B cell (primary cell): ENCODE measurements at regions of chr1 and their contacts with region 1.

Region 1: GRCh38 chr1:74733604-74734484 is 892 bp downstream of the TYW3 start:
- DNase-seq: peak; percentile 76
- ATAC-seq: peak; percentile 60
- H3K4me3 ChIP-seq: peak overlapping the region; percentile 71 to 96 (median 78)
- H3K4me3 Mint-ChIP-seq: peak overlapping the region; percentile 98
- H3K27ac ChIP-seq: peak overlapping the region; percentile 73
- H3K27ac Mint-ChIP-seq: peak overlapping the region; percentile 97
- H3K4me1 ChIP-seq: peaks cover 9 to 15% of the 10 kb centered on the region in 2 donors
- H3K4me1 Mint-ChIP-seq: peaks cover 31% of the 10 kb centered on the region
- H3K27me3 ChIP-seq: no peaks in the 10 kb centered on the region
- H3K27me3 Mint-ChIP-seq: no peaks in the 10 kb centered on the region
- CTCF ChIP-seq: peak; percentile 82

Region 2: GRCh38 chr1:74197657-74198552 is 535.9 kb before region 1 on chr1 and contains the starts of genes FPGT and LRRIQ3:
- CTCF ChIA-PET with region 1: no interaction called
- POLR2A ChIA-PET with region 1: no interaction called
- intact Hi-C with region 1: loop called (anchors 1 kb)
- DNase-seq: peak; percentile 96
- ATAC-seq: peak; percentile 97
- H3K4me3 ChIP-seq: peak within 1 kb of the TSS; percentile 58 to 95 (median 77)
- H3K4me3 Mint-ChIP-seq: peak within 1 kb of the TSS; percentile 93
- H3K27ac ChIP-seq: peak within 1 kb of the TSS; percentile 77 to 85
- H3K27ac Mint-ChIP-seq: peak within 1 kb of the TSS; percentile 96
- H3K4me1 ChIP-seq: peaks cover 8 to 16% of the 10 kb centered on the region in 2 donors
- H3K4me1 Mint-ChIP-seq: peaks cover 24% of the 10 kb centered on the region
- H3K27me3 ChIP-seq: no peaks in the 10 kb centered on the region
- H3K27me3 Mint-ChIP-seq: no peaks in the 10 kb centered on the region
- CTCF ChIP-seq: no peak
- total RNA-seq, gene FPGT: 10.7 and 14.8 TPM in 2 replicates
- total RNA-seq, gene LRRIQ3: 1.4 and 2.2 TPM in 2 replicates

Region 3: GRCh38 chr1:74652597-74653139 is 81.2 kb before region 1 on chr1:
- CTCF ChIA-PET with region 1: interaction called, 3 read pairs
- POLR2A ChIA-PET with region 1: no interaction called
- intact Hi-C with region 1: loop called (anchors 2 kb)
- DNase-seq: peak; percentile 67
- ATAC-seq: peak; percentile 88
- H3K4me3 ChIP-seq: peak overlapping the region in 2 of 5 experiments; percentile 2 to 13
- H3K4me3 Mint-ChIP-seq: peak overlapping the region; percentile 21
- H3K27ac ChIP-seq: peak overlapping the region in 1 of 2 donors; percentile 1
- H3K27ac Mint-ChIP-seq: peak overlapping the region; percentile 38
- H3K4me1 ChIP-seq: peaks cover 17 to 18% of the 10 kb centered on the region in 2 donors
- H3K4me1 Mint-ChIP-seq: peaks cover 36% of the 10 kb centered on the region
- H3K27me3 ChIP-seq: no peaks in the 10 kb centered on the region
- H3K27me3 Mint-ChIP-seq: no peaks in the 10 kb centered on the region
- CTCF ChIP-seq: no peak

Region 4: GRCh38 chr1:74689621-74690363 is 44.1 kb before region 1 on chr1:
- CTCF ChIA-PET with region 1: interaction called, 14 read pairs
- POLR2A ChIA-PET with region 1: no interaction called
- intact Hi-C with region 1: no loop called
- DNase-seq: peak; percentile 64
- ATAC-seq: no peak
- H3K4me3 ChIP-seq: no peak overlapping the region
- H3K4me3 Mint-ChIP-seq: no peak overlapping the region
- H3K27ac ChIP-seq: no peak overlapping the region
- H3K27ac Mint-ChIP-seq: no peak overlapping the region
- H3K4me1 ChIP-seq: no peaks in the 10 kb centered on the region
- H3K4me1 Mint-ChIP-seq: no peaks in the 10 kb centered on the region
- H3K27me3 ChIP-seq: no peaks in the 10 kb centered on the region
- H3K27me3 Mint-ChIP-seq: no peaks in the 10 kb centered on the region
- CTCF ChIP-seq: peak; percentile 91